PC-3 (cell line): ENCODE measurements at regions of chr2 and their contacts with region 1.

Region 1: DNA sequence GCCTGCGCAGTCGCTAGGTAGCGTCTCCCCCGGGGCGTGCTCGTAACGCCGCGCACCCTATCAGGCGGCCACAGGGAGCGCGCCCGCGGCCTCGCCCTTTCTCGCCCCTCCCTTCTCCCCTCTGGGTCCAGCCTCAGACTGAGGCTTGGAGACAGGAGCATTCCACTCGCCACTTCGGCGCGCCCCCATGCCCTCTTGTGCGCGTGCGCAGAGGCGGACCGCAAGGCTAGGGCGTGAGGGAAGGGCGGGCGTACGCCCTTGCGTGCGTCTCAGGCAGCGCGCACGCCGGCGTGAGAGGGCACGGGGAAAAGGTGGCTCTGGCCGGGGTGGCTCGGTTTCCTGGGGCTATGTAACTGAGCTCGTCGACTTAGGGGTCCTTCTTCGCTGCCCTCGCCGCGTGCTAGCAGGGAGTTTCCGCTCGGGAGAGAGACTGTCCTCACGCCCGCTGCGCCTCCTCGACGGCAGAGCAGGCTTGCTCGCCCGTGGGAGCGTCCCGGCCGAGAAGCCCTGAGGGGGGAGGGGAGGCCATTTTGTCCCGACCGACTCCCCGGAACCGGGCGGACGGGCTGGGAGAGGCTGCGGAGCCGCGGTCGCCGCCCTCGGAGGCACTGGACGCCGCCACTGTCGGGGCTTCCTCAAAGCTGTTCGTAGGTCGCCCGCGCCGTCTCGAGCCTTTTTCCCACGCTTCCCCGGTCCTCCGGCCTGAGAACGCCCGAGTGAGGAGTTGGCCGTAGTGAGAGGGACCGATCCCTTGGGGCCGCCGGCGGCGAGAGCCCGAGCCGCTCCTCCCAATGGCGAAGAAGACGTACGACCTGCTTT is at the start of gene RAB10:
- DNase-seq: peak; percentile 99
- ATAC-seq: peak; percentile 85
- H3K4me3 ChIP-seq: peak within 1 kb of the TSS; percentile 85
- H3K27ac ChIP-seq: peak within 1 kb of the TSS; percentile 95
- H3K4me1 ChIP-seq: peaks cover 10% of the 10 kb centered on the region
- H3K27me3 ChIP-seq: no peaks in the 10 kb centered on the region
- CTCF ChIP-seq: no peak
- total RNA-seq, gene RAB10: 138 and 149 TPM in 2 replicates

Region 2: DNA sequence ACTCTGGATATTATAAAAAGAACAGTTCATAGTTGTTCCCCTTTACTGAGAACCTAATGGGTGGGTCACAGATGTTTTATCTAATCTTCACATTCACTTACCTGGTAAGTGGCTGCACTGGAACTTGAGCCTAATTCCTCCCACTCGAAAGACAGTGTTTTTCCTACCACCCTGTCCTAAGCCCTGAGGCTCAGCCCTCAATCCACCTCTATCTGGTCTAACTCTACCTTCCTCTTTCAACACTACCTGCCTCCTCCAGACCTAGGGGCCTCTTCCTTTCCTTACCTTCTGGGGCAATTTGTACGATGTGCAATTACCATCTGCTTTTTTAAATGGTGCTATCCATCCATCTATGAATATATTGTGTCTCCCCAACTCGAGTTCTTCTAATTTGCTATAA is 42.1 kb before region 1 on chr2:
- CTCF ChIA-PET with region 1: interaction called, 5 read pairs
- POLR2A ChIA-PET with region 1: no interaction called
- intact Hi-C with region 1: loop called (anchors 1 kb)
- DNase-seq: no peak
- ATAC-seq: peak; percentile 35
- H3K4me3 ChIP-seq: peak overlapping the region; percentile 51; the same call in 1 of the 2 replicates
- H3K27ac ChIP-seq: no peak overlapping the region
- H3K4me1 ChIP-seq: peaks cover 6% of the 10 kb centered on the region
- H3K27me3 ChIP-seq: no peaks in the 10 kb centered on the region
- CTCF ChIP-seq: no peak

Region 3: DNA sequence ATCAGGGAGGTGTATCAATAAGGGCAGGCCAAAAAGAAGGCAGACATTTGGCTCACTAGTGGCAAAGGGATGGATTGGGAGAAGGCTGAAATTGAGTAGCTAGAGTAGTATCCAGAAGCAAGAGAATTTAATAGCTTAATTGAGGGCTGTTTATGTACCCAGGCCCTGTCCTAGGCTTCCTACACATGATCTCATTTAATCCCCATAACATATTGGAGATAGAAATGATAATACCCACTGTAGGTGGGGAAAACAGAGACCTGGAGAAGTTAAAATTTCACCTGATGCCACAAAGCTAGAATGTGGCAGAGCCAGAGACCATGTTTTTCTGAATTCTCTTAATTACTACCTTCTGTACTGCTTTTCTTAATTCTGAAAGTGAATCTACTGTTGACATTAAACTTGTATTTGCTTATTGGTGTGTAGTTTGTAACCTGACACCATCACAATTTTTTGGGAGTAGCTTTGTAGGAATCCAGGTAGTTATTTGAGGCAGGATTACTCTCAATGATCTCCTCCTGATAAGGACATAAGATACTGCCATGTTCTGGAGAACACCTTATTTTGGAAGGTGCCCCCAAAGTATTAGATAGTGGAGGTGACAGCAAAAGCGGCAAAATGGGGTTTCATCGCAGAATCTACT is 42.1 kb after region 1 on chr2:
- CTCF ChIA-PET with region 1: interaction called, 8 read pairs
- POLR2A ChIA-PET with region 1: interaction called, 3 read pairs
- intact Hi-C with region 1: loop called (anchors 2 kb)
- DNase-seq: peak; percentile 67
- ATAC-seq: peak; percentile 33
- H3K4me3 ChIP-seq: peak overlapping the region; percentile 5; the same call in 1 of the 2 replicates
- H3K27ac ChIP-seq: peak overlapping the region; percentile 40
- H3K4me1 ChIP-seq: peaks cover 81% of the 10 kb centered on the region
- H3K27me3 ChIP-seq: no peaks in the 10 kb centered on the region
- CTCF ChIP-seq: no peak

Region 4: DNA sequence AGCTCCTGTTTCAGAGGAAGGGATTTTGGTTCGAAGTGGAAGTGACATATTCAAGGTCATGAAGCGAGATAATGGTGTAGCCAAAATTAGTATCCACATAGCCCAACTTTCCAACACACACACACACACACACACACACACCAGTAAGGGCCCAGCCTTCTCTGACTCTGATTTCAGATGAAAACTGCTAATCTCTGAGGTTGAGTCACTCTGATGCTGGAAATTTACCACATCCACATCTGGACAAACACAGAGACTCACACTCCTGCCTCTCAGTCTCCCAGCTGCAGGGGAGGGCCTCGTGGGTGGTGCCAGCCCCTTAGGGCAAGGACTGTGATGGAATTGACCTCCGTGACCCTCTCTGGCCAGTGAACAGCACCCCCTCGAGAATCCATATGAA is 701.1 kb after region 1 on chr2:
- CTCF ChIA-PET with region 1: no interaction called
- POLR2A ChIA-PET with region 1: no interaction called
- intact Hi-C with region 1: no loop called
- DNase-seq: peak; percentile 55
- ATAC-seq: peak; percentile 62; the same call in 1 of the 2 replicates
- H3K4me3 ChIP-seq: no peak overlapping the region
- H3K27ac ChIP-seq: no peak overlapping the region
- H3K4me1 ChIP-seq: no peaks in the 10 kb centered on the region
- H3K27me3 ChIP-seq: no peaks in the 10 kb centered on the region
- CTCF ChIP-seq: no peak